Activated naive CD4-positive, alpha-beta T cell treated with anti-CD3 and anti-CD28 coated beads for 36 hours (primary cell): ENCODE measurements at regions of chr5 and their contacts with region 1.

Region 1: GRCh38 chr5:102778478-102778877 is 23.4 kb downstream of the PAM start:
- DNase-seq: no peak
- H3K4me3 Mint-ChIP-seq: no peak overlapping the region
- H3K27ac Mint-ChIP-seq: peak overlapping the region; percentile 20
- H3K4me1 Mint-ChIP-seq: peaks cover 73% of the 10 kb centered on the region
- H3K27me3 Mint-ChIP-seq: no peaks in the 10 kb centered on the region

Region 2: GRCh38 chr5:102755686-102756371 is 22.6 kb before region 1 on chr5:
- CTCF ChIA-PET with region 1: interaction called, 16 read pairs
- intact Hi-C with region 1: loop called (anchors 1 kb)
- DNase-seq: peak; percentile 88
- H3K4me3 Mint-ChIP-seq: peak overlapping the region; percentile 93
- H3K27ac Mint-ChIP-seq: peak overlapping the region; percentile 93
- H3K4me1 Mint-ChIP-seq: peaks cover 52% of the 10 kb centered on the region
- H3K27me3 Mint-ChIP-seq: peaks cover 17% of the 10 kb centered on the region

Region 3: DNA sequence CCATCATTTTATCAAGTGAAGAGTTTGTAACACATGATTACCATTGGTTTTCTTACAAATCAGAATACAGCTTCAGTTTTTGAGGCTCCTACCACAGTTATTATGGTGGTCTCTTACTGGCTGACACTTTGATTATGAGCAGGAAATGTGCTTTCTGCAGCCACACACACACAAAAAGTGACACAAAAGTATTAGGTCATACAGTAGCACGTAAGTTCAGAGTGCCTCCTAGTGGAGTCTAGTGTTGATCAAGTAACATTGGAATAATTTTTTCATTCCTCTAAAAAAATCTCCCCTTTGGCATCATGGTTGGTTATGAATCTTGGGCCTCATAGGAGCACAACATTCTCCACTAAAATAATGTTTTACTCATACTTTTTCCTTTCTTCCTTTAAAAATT is 14.2 kb after region 1 on chr5:
- CTCF ChIA-PET with region 1: interaction called, 14 read pairs
- intact Hi-C with region 1: no loop called
- DNase-seq: no peak
- H3K4me3 Mint-ChIP-seq: no peak overlapping the region
- H3K27ac Mint-ChIP-seq: no peak overlapping the region
- H3K4me1 Mint-ChIP-seq: peaks cover 20% of the 10 kb centered on the region
- H3K27me3 Mint-ChIP-seq: no peaks in the 10 kb centered on the region

Region 4: DNA sequence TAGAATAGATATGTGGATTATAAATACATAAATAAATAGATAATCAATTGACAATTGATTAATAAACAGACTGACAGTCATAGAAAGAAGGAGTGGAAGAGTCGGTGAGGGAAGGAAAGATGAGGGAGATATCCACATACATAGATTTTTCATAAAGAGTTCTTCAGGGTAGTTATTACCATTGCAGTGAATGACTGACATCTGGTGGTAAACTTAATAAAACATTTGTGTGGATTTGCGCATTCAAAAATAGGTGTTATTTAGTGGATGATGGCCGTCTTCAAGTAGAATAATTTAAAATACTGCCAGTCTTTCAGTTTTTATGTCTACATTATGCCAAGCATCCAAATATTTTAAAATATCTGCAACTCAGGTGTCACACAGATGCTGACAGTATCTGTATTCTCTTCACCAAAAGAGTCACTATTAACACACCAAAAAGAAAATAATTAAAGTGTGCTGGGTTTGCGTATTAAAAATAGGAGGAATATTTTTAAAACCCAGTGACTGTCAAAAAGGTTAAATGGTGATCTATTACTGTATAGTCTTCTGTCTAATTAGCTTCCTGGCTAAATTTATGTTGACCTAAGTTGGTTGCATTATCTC is 262.7 kb after region 1 on chr5:
- CTCF ChIA-PET with region 1: interaction called, 3 read pairs
- intact Hi-C with region 1: loop called (anchors 1 kb)
- DNase-seq: no peak
- H3K4me3 Mint-ChIP-seq: no peak overlapping the region
- H3K27ac Mint-ChIP-seq: no peak overlapping the region
- H3K4me1 Mint-ChIP-seq: no peaks in the 10 kb centered on the region
- H3K27me3 Mint-ChIP-seq: no peaks in the 10 kb centered on the region

Region 5: DNA sequence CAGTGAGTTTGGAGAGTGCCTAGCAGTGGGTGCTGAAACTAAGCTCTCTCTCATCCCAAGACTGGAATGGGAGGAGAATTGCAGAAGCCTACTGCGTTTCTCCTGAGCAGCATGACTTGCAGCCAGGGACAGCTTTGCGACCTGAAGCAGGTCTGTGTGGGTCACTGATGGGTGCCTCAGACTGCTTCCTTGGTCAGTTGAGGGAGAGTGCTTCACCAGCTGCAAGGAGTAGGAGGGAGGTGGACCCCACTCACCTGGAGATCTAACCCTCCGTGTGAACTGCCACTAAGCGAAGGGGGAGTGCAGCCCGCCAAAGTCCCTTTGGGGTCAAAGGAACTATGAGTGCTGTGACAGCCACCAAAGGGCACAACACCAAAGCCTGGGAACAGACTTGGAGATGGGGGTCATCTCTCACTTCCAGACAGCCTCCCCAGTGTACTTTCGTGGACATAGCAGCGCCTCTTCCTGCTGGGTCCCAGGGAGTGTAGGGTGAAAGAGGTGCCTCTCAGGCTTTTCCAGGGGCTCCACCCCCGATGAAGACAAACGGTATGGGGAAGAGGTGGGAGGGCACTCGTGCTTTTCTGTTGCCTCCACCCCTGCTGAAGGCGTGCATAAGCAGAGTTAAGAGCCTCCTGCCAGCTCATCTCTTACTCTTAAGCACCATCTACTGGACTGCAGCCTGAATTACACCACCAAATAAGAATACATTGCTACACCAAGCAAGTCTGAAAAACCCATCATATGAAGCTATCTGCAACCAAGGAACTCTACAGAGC is 445.8 kb after region 1 on chr5:
- CTCF ChIA-PET with region 1: no interaction called
- intact Hi-C with region 1: loop called (anchors 1 kb)
- DNase-seq: peak; percentile 44
- H3K4me3 Mint-ChIP-seq: no peak overlapping the region
- H3K27ac Mint-ChIP-seq: no peak overlapping the region
- H3K4me1 Mint-ChIP-seq: no peaks in the 10 kb centered on the region
- H3K27me3 Mint-ChIP-seq: peaks cover 15% of the 10 kb centered on the region